Activated CD8-positive, alpha-beta T cell treated with anti-CD3 and anti-CD28 coated beads for 36 hours (primary cell): ENCODE measurements at regions of chr2 and their contacts with region 1.

Region 1: GRCh38 chr2:162221064-162221463 is 22.2 kb downstream of the FAP start:
- DNase-seq: peak; percentile 74
- ATAC-seq: peak; percentile 85
- H3K4me3 Mint-ChIP-seq: no peak overlapping the region
- H3K27ac Mint-ChIP-seq: no peak overlapping the region
- H3K4me1 Mint-ChIP-seq: no peaks in the 10 kb centered on the region
- H3K27me3 Mint-ChIP-seq: peaks cover 9% of the 10 kb centered on the region
- CTCF ChIP-seq: peak; percentile 90

Region 2: GRCh38 chr2:162153608-162154224 is 67.3 kb before region 1 on chr2:
- CTCF ChIA-PET with region 1: interaction called, 12 read pairs
- POLR2A ChIA-PET with region 1: no interaction called
- intact Hi-C with region 1: no loop called
- DNase-seq: peak; percentile 79
- ATAC-seq: peak; percentile 96
- H3K4me3 Mint-ChIP-seq: no peak overlapping the region
- H3K27ac Mint-ChIP-seq: no peak overlapping the region
- H3K4me1 Mint-ChIP-seq: no peaks in the 10 kb centered on the region
- H3K27me3 Mint-ChIP-seq: peaks cover 19% of the 10 kb centered on the region
- CTCF ChIP-seq: peak; percentile 76

Region 3: GRCh38 chr2:162184821-162185446 is 36.1 kb before region 1 on chr2:
- CTCF ChIA-PET with region 1: interaction called, 19 read pairs
- POLR2A ChIA-PET with region 1: no interaction called
- intact Hi-C with region 1: no loop called
- DNase-seq: no peak
- ATAC-seq: peak; percentile 24
- H3K4me3 Mint-ChIP-seq: no peak overlapping the region
- H3K27ac Mint-ChIP-seq: no peak overlapping the region
- H3K4me1 Mint-ChIP-seq: peaks cover 4% of the 10 kb centered on the region
- H3K27me3 Mint-ChIP-seq: peaks cover 9% of the 10 kb centered on the region
- CTCF ChIP-seq: no peak

Region 4: GRCh38 chr2:162233197-162233596 is 12.1 kb after region 1 on chr2:
- CTCF ChIA-PET with region 1: interaction called, 46 read pairs
- POLR2A ChIA-PET with region 1: no interaction called
- intact Hi-C with region 1: no loop called
- DNase-seq: no peak
- ATAC-seq: no peak
- H3K4me3 Mint-ChIP-seq: no peak overlapping the region
- H3K27ac Mint-ChIP-seq: no peak overlapping the region
- H3K4me1 Mint-ChIP-seq: no peaks in the 10 kb centered on the region
- H3K27me3 Mint-ChIP-seq: peaks cover 9% of the 10 kb centered on the region
- CTCF ChIP-seq: no peak

Region 5: GRCh38 chr2:162277381-162277780 is 56.3 kb after region 1 on chr2:
- CTCF ChIA-PET with region 1: interaction called, 10 read pairs
- POLR2A ChIA-PET with region 1: no interaction called
- intact Hi-C with region 1: no loop called
- DNase-seq: no peak
- ATAC-seq: no peak
- H3K4me3 Mint-ChIP-seq: no peak overlapping the region
- H3K27ac Mint-ChIP-seq: no peak overlapping the region
- H3K4me1 Mint-ChIP-seq: peaks cover 2% of the 10 kb centered on the region
- H3K27me3 Mint-ChIP-seq: no peaks in the 10 kb centered on the region
- CTCF ChIP-seq: no peak

Region 6: GRCh38 chr2:162308752-162309503 is 87.9 kb after region 1 on chr2:
- CTCF ChIA-PET with region 1: interaction called, 292 read pairs
- POLR2A ChIA-PET with region 1: no interaction called
- intact Hi-C with region 1: no loop called
- DNase-seq: peak; percentile 20
- ATAC-seq: peak; percentile 73
- H3K4me3 Mint-ChIP-seq: no peak overlapping the region
- H3K27ac Mint-ChIP-seq: peak overlapping the region; percentile 20
- H3K4me1 Mint-ChIP-seq: peaks cover 35% of the 10 kb centered on the region
- H3K27me3 Mint-ChIP-seq: no peaks in the 10 kb centered on the region
- CTCF ChIP-seq: no peak

Region 7: DNA sequence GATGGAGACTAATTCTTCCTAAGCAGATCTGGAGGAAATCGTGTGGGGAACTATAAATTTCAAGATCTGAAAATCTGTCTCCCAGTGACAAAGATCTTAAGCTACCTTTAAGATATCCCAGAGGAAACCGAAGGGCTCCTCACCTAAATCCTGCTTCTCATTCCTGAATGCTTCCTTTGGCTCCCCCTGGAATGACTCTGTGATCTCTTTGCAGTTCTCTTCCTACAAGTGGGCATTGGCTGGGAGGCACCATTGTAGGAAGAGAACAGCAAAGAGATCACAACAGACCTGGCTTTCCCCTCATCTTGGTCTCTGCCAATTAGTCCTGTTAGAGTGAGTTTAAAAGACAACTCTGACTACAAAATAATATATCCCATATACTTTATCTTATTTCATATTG is 687.5 kb after region 1 on chr2:
- CTCF ChIA-PET with region 1: no interaction called
- POLR2A ChIA-PET with region 1: no interaction called
- intact Hi-C with region 1: no loop called
- DNase-seq: no peak
- ATAC-seq: no peak
- H3K4me3 Mint-ChIP-seq: no peak overlapping the region
- H3K27ac Mint-ChIP-seq: no peak overlapping the region
- H3K4me1 Mint-ChIP-seq: no peaks in the 10 kb centered on the region
- H3K27me3 Mint-ChIP-seq: no peaks in the 10 kb centered on the region
- CTCF ChIP-seq: no peak